Common myeloid progenitor, CD34-positive (primary cell): ENCODE measurements at regions of chr13 and their contacts with region 1.

Region 1: DNA sequence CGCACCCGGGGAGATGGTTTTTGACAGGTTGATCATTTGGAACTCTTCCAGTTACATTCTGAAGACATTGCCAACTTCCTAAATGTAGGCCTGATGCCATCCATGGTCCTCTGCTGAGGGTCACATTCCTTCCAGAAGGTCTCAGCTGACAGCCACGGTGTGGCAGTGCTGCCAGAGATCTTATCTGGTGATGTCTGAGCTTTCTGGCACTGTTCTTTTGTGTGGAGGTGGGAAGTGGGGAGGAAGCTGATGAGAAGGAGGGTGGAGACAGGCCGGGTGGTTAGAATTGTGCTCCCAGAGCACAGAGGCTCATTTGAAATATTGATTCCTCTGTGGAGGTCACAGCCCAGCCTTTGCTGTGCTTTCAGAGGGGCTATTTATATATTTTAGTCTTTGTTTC is 16.1 kb upstream of the MTIF3 start:
- DNase-seq: peak in 1 of 3 donors; percentile 36
- H3K4me3 ChIP-seq: no peak overlapping the region
- H3K27ac ChIP-seq: no peak overlapping the region
- H3K4me1 ChIP-seq: peaks cover 0 to 10% (median 7%) of the 10 kb centered on the region in 4 experiments
- H3K27me3 ChIP-seq: no peaks in the 10 kb centered on the region

Region 2: DNA sequence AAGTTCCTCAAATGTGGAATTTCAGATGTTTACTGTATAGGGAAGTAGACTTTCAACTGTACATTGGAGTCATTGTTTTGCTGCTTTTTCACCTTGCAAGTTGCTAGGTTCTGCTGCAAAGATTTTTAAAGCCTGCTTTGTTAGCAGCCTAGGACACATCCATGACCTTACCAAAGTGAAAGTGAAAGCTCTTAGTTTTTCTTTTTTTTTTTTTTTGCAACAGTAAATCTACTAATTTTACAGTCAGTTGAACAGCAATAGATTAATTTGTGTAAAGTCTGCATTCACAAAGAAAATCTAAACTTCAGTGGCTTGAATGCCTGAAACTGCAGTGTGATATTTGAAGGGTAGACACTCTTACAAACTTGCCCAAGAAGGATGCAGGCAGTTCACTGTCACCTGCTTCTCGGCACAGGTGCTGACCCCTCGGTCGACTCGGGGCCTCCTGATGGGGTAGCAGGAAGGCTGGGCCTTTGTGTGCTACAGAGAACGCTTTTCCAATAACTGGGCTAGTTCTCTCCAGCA is 11.1 kb before region 1 on chr13:
- CTCF ChIA-PET with region 1: interaction called, 15 read pairs
- POLR2A ChIA-PET with region 1: no interaction called
- DNase-seq: peak in 2 of 3 donors; percentile 58 to 66
- H3K4me3 ChIP-seq: peak overlapping the region in 6 of 7 experiments; percentile 29 to 78 (median 57)
- H3K27ac ChIP-seq: peak overlapping the region in 1 of 2 experiments; percentile 79
- H3K4me1 ChIP-seq: peaks cover 15 to 31% (median 24%) of the 10 kb centered on the region in 4 experiments
- H3K27me3 ChIP-seq: no peaks in the 10 kb centered on the region